GM12878 (cell line): ENCODE measurements at regions of chr2 and their contacts with region 1.

Region 1: DNA sequence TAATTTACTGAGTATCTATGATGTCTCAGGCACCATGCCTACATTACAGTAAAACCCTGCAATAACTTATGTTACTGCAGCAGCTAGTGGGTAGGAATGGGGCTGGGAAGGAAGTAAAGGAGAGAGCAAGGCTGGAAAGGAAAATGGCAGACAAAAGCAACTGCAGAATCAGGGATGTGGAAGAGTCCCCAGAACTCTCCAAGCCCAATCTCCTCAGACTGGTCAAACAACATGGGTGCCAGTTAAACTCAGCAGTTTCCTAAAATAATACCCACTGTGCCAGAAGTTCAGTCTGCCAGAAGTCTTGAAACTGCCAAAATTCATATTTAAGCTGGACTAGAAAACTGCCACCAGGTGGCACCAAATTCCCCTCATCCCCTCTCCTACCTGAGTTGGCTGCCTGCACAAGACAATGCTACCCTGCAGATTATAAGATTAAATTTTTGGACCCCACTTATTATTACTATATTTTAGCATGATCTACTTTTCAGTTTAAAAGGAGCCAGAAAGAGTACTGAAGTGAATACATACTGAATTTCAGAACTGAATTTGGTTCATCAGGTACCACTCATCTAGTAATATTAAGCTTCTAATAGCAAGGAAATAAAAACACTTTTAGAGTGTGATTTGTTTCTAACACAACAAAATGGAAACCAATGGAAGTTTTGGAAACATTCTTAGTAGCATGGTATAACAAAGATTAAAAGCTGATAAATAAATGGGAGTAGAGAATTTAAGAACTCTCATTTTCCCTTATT is 86.8 kb upstream of the DNER start:
- DNase-seq: peak; percentile 23
- ATAC-seq: peak; percentile 91
- H3K4me3 ChIP-seq: no peak overlapping the region
- H3K27ac ChIP-seq: no peak overlapping the region
- H3K4me1 ChIP-seq: no peaks in the 10 kb centered on the region
- H3K27me3 ChIP-seq: no peaks in the 10 kb centered on the region
- CTCF ChIP-seq: peak; percentile 60 to 79 (median 78)
- EP300 ChIP-seq: no peak
- POLR2A ChIP-seq: no peak
- RAD21 ChIP-seq: peak; percentile 81

Region 2: GRCh38 chr2:229815858-229816257 is 14.7 kb after region 1 on chr2:
- CTCF ChIA-PET with region 1: interaction called, 34 read pairs
- POLR2A ChIA-PET with region 1: no interaction called
- RAD21 ChIA-PET with region 1: interaction called, 3 read pairs
- SMC1A ChIA-PET with region 1: interaction called, 10 read pairs
- in situ Hi-C with region 1: no loop called
- intact Hi-C with region 1: no loop called
- DNase-seq: no peak
- ATAC-seq: no peak
- H3K4me3 ChIP-seq: no peak overlapping the region
- H3K27ac ChIP-seq: no peak overlapping the region
- H3K4me1 ChIP-seq: no peaks in the 10 kb centered on the region
- H3K27me3 ChIP-seq: no peaks in the 10 kb centered on the region
- CTCF ChIP-seq: no peak
- EP300 ChIP-seq: no peak
- POLR2A ChIP-seq: no peak
- RAD21 ChIP-seq: no peak

Region 3: DNA sequence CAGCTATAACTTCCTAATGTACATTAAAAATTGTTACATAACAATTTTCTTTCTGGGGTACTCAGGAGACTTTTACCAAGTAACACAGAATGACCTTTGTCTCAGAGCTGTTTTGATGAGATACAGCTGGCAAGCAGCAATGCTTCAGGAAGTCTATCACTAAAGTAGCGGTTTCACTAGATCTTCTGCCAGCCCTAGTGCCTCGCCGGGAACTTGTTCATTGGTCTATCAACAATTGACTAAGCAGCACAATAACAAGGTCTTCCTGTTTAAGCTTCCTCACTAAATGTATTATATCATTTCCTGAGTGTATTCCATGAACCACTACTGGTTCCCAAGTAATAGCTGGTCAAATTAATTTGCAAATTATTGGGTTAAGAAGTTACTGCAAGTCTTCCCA is 51.4 kb after region 1 on chr2:
- CTCF ChIA-PET with region 1: interaction called, 26 read pairs
- POLR2A ChIA-PET with region 1: no interaction called
- RAD21 ChIA-PET with region 1: no interaction called
- SMC1A ChIA-PET with region 1: interaction called, 7 read pairs
- in situ Hi-C with region 1: no loop called
- intact Hi-C with region 1: no loop called
- DNase-seq: peak; percentile 42
- ATAC-seq: peak; percentile 84
- H3K4me3 ChIP-seq: no peak overlapping the region
- H3K27ac ChIP-seq: no peak overlapping the region; the same call in 1 of the 2 replicates
- H3K4me1 ChIP-seq: peaks cover 6% of the 10 kb centered on the region; the same call in 1 of the 2 replicates
- H3K27me3 ChIP-seq: no peaks in the 10 kb centered on the region
- CTCF ChIP-seq: no peak
- EP300 ChIP-seq: no peak
- POLR2A ChIP-seq: no peak
- RAD21 ChIP-seq: no peak

Region 4: DNA sequence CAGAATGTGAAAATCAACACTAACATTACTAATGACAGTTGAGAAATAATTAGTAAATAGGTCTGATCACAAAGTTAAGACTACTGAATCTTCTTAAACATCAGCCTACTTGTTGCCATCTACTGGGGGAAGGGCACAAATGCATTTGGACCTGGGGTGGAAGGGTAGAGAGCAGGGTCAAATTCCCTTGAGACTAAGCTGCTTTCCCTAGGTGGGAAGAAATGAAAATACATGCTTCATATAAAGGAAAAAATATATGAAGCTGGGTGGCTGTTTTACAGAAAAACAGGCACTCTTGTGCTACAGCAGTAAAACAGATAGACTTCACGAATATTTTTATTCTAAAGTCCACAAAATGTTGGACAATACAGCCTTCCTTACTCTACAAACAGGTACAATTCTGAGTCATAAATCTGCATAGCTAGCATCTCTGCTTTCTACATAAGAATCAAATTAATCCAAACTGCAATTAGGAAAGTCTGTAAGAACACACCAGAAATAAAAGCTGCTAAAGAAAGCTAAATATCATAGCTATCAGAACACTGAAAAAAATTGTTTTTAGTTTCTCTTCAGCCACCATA is 109.7 kb after region 1 on chr2:
- CTCF ChIA-PET with region 1: interaction called, 107 read pairs
- POLR2A ChIA-PET with region 1: no interaction called
- RAD21 ChIA-PET with region 1: interaction called, 44 read pairs
- SMC1A ChIA-PET with region 1: interaction called, 42 read pairs
- in situ Hi-C with region 1: no loop called
- intact Hi-C with region 1: loop called (anchors 1 kb)
- DNase-seq: no peak
- ATAC-seq: peak; percentile 82
- H3K4me3 ChIP-seq: peak overlapping the region; percentile 2; the same call in 1 of the 2 replicates
- H3K27ac ChIP-seq: 0 out of 2 replicates have a peak overlapping the region, but pooled peaks have one; percentile 3
- H3K4me1 ChIP-seq: peaks cover 41% of the 10 kb centered on the region
- H3K27me3 ChIP-seq: no peaks in the 10 kb centered on the region
- CTCF ChIP-seq: peak; percentile 51 to 60 (median 54)
- EP300 ChIP-seq: no peak
- POLR2A ChIP-seq: no peak
- RAD21 ChIP-seq: peak; percentile 49

Region 5: GRCh38 chr2:229927817-229928321 is 126.7 kb after region 1 on chr2:
- CTCF ChIA-PET with region 1: interaction called, 11 read pairs
- POLR2A ChIA-PET with region 1: interaction called, 3 read pairs
- RAD21 ChIA-PET with region 1: interaction called, 3 read pairs
- SMC1A ChIA-PET with region 1: interaction called, 4 read pairs
- in situ Hi-C with region 1: no loop called
- intact Hi-C with region 1: no loop called
- DNase-seq: no peak
- ATAC-seq: no peak
- H3K4me3 ChIP-seq: no peak overlapping the region
- H3K27ac ChIP-seq: no peak overlapping the region
- H3K4me1 ChIP-seq: no peaks in the 10 kb centered on the region
- H3K27me3 ChIP-seq: no peaks in the 10 kb centered on the region
- CTCF ChIP-seq: no peak
- EP300 ChIP-seq: no peak
- POLR2A ChIP-seq: no peak
- RAD21 ChIP-seq: no peak

Region 6: DNA sequence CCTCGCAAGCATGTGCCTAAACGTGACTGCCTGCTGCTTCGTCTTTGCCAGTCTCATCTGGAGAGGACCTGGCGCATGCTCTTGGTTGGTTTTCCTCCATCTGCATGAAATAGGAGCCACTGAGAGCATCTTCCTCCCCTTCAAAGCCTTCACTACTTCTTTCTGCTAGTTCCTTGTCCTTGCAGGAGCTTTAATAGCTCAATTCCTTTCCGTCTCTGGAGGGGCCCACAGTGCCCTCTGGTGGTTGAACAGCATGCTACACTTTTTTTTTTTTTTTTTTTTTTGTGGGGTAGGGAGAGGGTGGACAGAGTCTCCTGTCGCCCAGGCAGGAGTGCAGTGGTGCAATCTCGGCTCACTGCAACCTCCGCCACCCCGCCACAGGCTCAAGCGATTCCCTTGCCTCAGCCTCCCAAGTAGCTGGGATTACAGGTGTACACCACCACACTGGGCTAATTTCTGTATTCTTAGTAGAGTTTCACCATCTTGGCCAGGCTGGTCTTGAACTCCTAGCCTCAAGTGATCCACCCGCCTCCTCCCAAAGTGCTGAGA is 359.0 kb after region 1 on chr2:
- CTCF ChIA-PET with region 1: interaction called, 16 read pairs
- POLR2A ChIA-PET with region 1: no interaction called
- RAD21 ChIA-PET with region 1: interaction called, 16 read pairs
- SMC1A ChIA-PET with region 1: interaction called, 11 read pairs
- in situ Hi-C with region 1: loop called (anchors 25 kb)
- intact Hi-C with region 1: loop called (anchors 1 kb)
- DNase-seq: peak; percentile 9
- ATAC-seq: peak; percentile 81
- H3K4me3 ChIP-seq: no peak overlapping the region
- H3K27ac ChIP-seq: no peak overlapping the region
- H3K4me1 ChIP-seq: no peaks in the 10 kb centered on the region
- H3K27me3 ChIP-seq: no peaks in the 10 kb centered on the region
- CTCF ChIP-seq: peak; percentile 63 to 70 (median 65)
- EP300 ChIP-seq: no peak
- POLR2A ChIP-seq: no peak
- RAD21 ChIP-seq: peak; percentile 86